ENCODE measurements at regions of chr11 and their contacts with region 1.

Region 1: GRCh38 chr11:62922658-62923431 is 1.7 kb upstream of the CHRM1 start:
- DNase-seq: no peak
- ATAC-seq: no peak
- H3K4me3 Mint-ChIP-seq: peak overlapping the region; percentile 13
- H3K27ac Mint-ChIP-seq: no peak overlapping the region
- H3K4me1 Mint-ChIP-seq: peaks cover 35% of the 10 kb centered on the region
- H3K27me3 Mint-ChIP-seq: peaks cover 46% of the 10 kb centered on the region
- CTCF ChIP-seq: no peak

Region 2: GRCh38 chr11:62879235-62879978 is 43.4 kb before region 1 on chr11:
- CTCF ChIA-PET with region 1: no interaction called
- POLR2A ChIA-PET with region 1: no interaction called
- intact Hi-C with region 1: no loop called
- DNase-seq: no peak
- ATAC-seq: no peak
- H3K4me3 Mint-ChIP-seq: peak overlapping the region; percentile 100
- H3K27ac Mint-ChIP-seq: peak overlapping the region; percentile 100
- H3K4me1 Mint-ChIP-seq: peaks cover 38% of the 10 kb centered on the region
- H3K27me3 Mint-ChIP-seq: no peaks in the 10 kb centered on the region
- CTCF ChIP-seq: no peak

Region 3: DNA sequence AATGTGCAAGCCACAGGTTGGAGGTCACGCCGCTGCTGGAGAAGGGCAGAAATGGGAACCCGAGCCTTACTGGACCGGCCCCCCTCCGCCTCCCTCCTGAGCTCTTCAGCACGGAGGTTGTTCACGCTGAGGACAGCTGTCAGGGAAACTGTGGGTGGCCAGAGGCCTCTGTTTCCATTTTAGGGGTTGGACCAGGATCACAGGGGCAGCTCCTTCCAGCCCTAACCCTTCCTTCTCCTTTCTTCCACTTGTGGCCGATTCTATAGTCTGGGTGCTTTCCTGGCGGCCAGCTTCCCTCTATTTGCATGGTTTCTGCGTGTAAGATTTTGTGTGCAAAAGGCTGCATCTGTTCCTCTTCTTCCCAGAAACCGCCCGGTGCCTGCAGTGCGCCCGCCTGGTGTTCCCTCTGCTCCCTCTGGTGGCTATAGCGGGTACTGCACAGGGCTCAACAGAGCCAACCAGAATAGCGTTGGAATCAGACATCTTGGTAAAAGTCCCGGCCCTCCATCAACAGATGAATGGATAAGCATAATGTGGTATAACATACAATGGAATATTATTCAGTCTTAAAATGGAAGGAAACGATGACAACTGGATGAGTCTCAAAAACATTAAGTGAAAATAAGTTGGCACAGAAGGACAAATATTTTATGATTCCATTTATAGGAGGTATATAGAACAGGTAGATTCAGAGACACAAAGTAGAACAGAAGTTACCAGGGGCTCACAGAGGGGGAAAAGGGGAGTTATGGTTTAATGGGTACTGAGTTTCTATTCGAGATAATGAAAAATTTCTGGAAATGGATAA is 101.2 kb after region 1 on chr11:
- CTCF ChIA-PET with region 1: no interaction called
- POLR2A ChIA-PET with region 1: no interaction called
- intact Hi-C with region 1: loop called (anchors 5 kb)
- DNase-seq: peak; percentile 75
- ATAC-seq: peak; percentile 94
- H3K4me3 Mint-ChIP-seq: no peak overlapping the region
- H3K27ac Mint-ChIP-seq: no peak overlapping the region
- H3K4me1 Mint-ChIP-seq: peaks cover 4% of the 10 kb centered on the region
- H3K27me3 Mint-ChIP-seq: peaks cover 29% of the 10 kb centered on the region
- CTCF ChIP-seq: peak; percentile 99